Activated T-helper 1 cell treated with anti-CD3 and anti-CD28 coated beads, Interleukin-12 subunit alpha, Interleukin-12 subunit beta, Interleukin-2, Interleukin-4 antibody, amounts not matched to agents 30 ng/mL and 10 ng/mL and 1 ng/mL, durations not matched to agents 14 hours and 24 hours and 36 hours (primary cell): ENCODE measurements at regions of chr20 and their contacts with region 1.

Region 1: DNA sequence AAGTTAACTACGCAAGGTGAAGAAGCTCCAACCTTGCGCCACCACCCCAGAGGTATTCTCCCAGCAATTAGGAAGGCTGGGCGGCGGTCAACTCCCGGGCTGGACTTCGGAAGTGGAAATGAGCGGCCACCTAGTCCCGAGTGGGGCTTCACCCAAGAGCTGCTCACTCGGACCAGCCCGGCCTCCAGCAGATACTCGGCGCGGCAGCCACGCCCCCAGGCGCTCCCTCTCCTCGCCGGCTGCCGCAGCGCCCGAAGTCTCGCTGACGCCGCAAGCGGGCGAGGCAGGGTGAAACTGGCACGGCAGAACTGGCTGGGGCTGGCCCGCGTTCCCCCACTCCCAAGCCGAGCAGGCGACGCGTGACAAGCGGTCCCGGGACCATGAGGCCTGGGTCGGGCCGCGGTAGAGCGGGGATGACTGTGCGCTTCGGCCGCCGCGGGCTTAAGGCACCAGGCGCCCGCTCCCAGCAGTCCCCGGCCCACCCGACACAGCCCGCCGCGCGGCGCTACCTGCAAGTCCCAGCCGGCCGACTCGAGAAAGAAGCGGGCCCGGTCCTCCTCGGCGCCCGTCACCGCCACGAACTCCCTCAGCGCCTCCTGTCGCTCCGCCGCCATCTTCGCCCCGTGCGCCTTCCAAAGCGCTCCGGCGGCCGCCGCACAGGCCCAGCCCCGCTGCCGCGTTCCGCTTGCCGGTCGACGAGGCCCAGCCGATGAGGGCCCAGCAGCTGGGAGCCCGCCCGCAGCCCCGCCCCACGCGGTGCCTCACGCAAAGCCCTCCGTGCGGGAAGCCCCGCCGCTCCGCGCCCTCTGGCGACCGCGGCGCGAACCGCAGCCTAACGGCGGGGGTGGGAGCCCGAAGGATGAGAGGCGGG is at the start of gene NSFL1C:
- DNase-seq: peak; percentile 97
- H3K4me3 Mint-ChIP-seq: peak within 1 kb of the TSS; percentile 90
- H3K27ac Mint-ChIP-seq: peak within 1 kb of the TSS; percentile 82
- H3K4me1 Mint-ChIP-seq: peaks cover 45% of the 10 kb centered on the region
- H3K27me3 Mint-ChIP-seq: peaks cover 12% of the 10 kb centered on the region
- total RNA-seq, gene NSFL1C: 108 and 111 TPM in 2 replicates

Region 2: GRCh38 chr20:1118336-1119127 is 347.9 kb before region 1 on chr20 and contains the start of gene PSMF1:
- intact Hi-C with region 1: loop called (anchors 1 kb)
- DNase-seq: peak; percentile 95
- H3K4me3 Mint-ChIP-seq: peak within 1 kb of the TSS; percentile 91
- H3K27ac Mint-ChIP-seq: peak within 1 kb of the TSS; percentile 81
- H3K4me1 Mint-ChIP-seq: peaks cover 56% of the 10 kb centered on the region
- H3K27me3 Mint-ChIP-seq: no peaks in the 10 kb centered on the region
- total RNA-seq, gene PSMF1: 185 and 189 TPM in 2 replicates

Region 3: GRCh38 chr20:1313236-1313964 is 153.0 kb before region 1 on chr20:
- intact Hi-C with region 1: loop called (anchors 1 kb)
- DNase-seq: peak; percentile 47
- H3K4me3 Mint-ChIP-seq: no peak overlapping the region
- H3K27ac Mint-ChIP-seq: no peak overlapping the region
- H3K4me1 Mint-ChIP-seq: peaks cover 16% of the 10 kb centered on the region
- H3K27me3 Mint-ChIP-seq: peaks cover 13% of the 10 kb centered on the region

Region 4: GRCh38 chr20:1437235-1437904 is 29.1 kb before region 1 on chr20:
- intact Hi-C with region 1: loop called (anchors 1 kb)
- DNase-seq: peak; percentile 66
- H3K4me3 Mint-ChIP-seq: no peak overlapping the region
- H3K27ac Mint-ChIP-seq: no peak overlapping the region
- H3K4me1 Mint-ChIP-seq: peaks cover 35% of the 10 kb centered on the region
- H3K27me3 Mint-ChIP-seq: peaks cover 17% of the 10 kb centered on the region

Region 5: DNA sequence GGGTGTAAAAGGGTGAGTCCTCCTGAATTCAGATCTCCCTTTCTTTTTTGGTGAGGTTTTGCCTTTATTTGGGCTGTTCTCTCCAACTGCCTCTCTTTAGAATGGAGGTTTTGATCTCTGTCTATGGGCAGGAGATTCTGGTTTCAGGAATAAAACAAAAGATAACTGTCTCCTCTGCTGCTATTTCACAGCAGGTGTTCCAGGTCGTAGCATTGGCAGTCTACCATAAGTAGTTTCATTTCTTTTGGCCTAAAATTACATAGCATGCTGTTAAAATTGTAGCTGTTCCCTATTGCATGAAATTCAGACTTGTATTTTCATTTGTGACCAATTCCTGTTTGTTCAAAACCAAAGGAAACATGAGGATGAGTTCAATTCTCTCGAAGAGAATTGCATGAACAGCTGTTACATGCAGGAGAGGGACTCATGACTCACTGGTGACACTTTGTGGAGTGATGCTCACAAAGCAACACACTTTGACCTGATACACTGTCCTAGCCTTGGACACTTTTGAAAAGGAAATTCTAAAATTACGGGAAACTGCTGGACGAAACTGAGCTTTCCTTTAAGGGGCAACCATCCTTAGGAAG is 267.9 kb after region 1 on chr20:
- intact Hi-C with region 1: loop called (anchors 1 kb)
- DNase-seq: no peak
- H3K4me3 Mint-ChIP-seq: no peak overlapping the region
- H3K27ac Mint-ChIP-seq: no peak overlapping the region
- H3K4me1 Mint-ChIP-seq: peaks cover 40% of the 10 kb centered on the region
- H3K27me3 Mint-ChIP-seq: peaks cover 2% of the 10 kb centered on the region

Region 6: DNA sequence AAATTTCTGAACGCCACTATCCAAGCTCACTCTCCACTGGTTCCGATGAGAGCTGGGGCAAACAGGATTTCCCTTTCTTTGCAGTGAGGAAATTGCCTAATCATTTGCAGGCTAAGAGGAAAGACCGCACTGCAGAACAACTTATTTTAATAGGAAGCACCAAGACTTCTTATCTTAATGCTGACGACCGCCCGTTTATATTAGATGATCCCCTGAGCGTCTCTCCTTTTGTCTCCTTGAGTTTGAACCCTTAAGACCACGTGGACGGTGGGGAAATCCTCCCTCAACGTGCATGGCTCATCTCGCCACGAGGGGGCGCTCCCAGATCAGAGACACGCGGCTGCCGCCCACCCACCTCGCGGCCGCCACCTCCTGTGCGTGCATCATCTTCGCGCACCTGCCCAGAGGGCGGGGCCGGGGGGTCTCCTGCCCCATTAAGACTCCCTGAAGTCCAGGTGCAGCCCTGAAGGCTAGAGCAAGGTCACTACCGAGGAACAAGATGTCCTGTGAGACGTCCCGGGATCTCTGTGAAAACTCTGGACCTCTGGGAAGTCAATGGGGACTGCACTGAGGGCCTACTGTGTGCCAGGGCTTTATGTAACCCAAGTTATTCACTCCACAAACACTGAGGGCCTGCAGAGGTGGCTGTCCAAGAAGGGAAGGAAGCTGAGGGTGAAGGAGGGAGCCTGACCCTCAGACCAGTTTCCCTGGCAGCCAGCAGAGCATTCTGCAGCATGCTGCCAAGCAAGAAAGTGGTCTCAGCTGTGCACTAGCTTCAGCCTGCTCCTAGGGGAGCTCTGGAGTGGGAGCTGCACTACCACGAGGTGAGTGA is 499.3 kb after region 1 on chr20:
- intact Hi-C with region 1: no loop called
- DNase-seq: peak; percentile 61
- H3K4me3 Mint-ChIP-seq: peak overlapping the region; percentile 46
- H3K27ac Mint-ChIP-seq: no peak overlapping the region
- H3K4me1 Mint-ChIP-seq: peaks cover 10% of the 10 kb centered on the region
- H3K27me3 Mint-ChIP-seq: peaks cover 10% of the 10 kb centered on the region

Region 7: GRCh38 chr20:2470423-2471193 is 1004.2 kb after region 1 on chr20 and contains the start of gene SNRPB:
- intact Hi-C with region 1: loop called (anchors 2 kb)
- DNase-seq: peak; percentile 96
- H3K4me3 Mint-ChIP-seq: peak within 1 kb of the TSS; percentile 99
- H3K27ac Mint-ChIP-seq: peak within 1 kb of the TSS; percentile 97
- H3K4me1 Mint-ChIP-seq: peaks cover 58% of the 10 kb centered on the region
- H3K27me3 Mint-ChIP-seq: no peaks in the 10 kb centered on the region
- total RNA-seq, gene SNRPB: 533 and 548 TPM in 2 replicates